Activated CD4-positive, alpha-beta memory T cell treated with anti-CD3 and anti-CD28 coated beads for 36 hours (primary cell): ENCODE measurements at regions of chr1 and their contacts with region 1.

Region 1: GRCh38 chr1:33633019-33633801 is 160.8 kb downstream of the ZSCAN20 start:
- DNase-seq: peak; percentile 90
- H3K4me3 Mint-ChIP-seq: no peak overlapping the region
- H3K27ac Mint-ChIP-seq: no peak overlapping the region
- H3K4me1 Mint-ChIP-seq: no peaks in the 10 kb centered on the region
- H3K27me3 Mint-ChIP-seq: peaks cover 16% of the 10 kb centered on the region

Region 2: GRCh38 chr1:32761253-32761880 is 871.8 kb before region 1 on chr1:
- CTCF ChIA-PET with region 1: no interaction called
- POLR2A ChIA-PET with region 1: no interaction called
- intact Hi-C with region 1: no loop called
- DNase-seq: peak; percentile 75
- H3K4me3 Mint-ChIP-seq: no peak overlapping the region
- H3K27ac Mint-ChIP-seq: peak overlapping the region; percentile 44
- H3K4me1 Mint-ChIP-seq: peaks cover 27% of the 10 kb centered on the region
- H3K27me3 Mint-ChIP-seq: no peaks in the 10 kb centered on the region

Region 3: DNA sequence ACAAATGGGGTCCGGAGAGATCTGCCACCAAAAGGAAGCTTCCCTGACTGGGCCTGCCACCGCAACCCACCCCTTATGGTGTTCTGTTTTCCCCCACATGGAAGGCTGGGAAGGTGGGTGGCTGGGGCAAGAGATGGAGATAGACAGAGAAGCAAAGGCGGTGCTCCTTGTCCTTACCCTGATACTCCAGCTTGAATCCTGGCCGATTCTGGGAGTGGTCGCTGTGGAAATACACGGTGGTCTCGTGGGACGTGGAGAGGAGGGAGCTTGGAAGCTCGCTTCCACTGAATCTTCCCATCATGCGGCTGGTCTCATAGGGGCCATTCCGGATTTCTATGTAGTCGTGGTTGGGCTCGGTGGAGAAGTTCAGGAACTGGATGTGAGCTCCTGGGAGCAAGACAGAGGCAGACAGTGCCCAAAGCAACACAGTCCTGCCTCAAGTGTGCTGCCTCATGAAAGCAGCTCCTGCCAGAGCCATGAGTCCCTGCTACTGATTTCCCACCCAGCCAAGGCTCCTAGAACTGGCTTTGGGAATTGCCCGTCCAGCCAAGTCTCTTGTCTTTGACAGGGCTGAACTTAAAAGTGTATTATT is 22.2 kb before region 1 on chr1:
- CTCF ChIA-PET with region 1: interaction called, 18 read pairs
- POLR2A ChIA-PET with region 1: no interaction called
- intact Hi-C with region 1: no loop called
- DNase-seq: no peak
- H3K4me3 Mint-ChIP-seq: no peak overlapping the region
- H3K27ac Mint-ChIP-seq: no peak overlapping the region
- H3K4me1 Mint-ChIP-seq: no peaks in the 10 kb centered on the region
- H3K27me3 Mint-ChIP-seq: peaks cover 13% of the 10 kb centered on the region

Region 4: GRCh38 chr1:33616773-33617172 is 16.4 kb before region 1 on chr1:
- CTCF ChIA-PET with region 1: interaction called, 18 read pairs
- POLR2A ChIA-PET with region 1: no interaction called
- intact Hi-C with region 1: no loop called
- DNase-seq: no peak
- H3K4me3 Mint-ChIP-seq: no peak overlapping the region
- H3K27ac Mint-ChIP-seq: no peak overlapping the region
- H3K4me1 Mint-ChIP-seq: no peaks in the 10 kb centered on the region
- H3K27me3 Mint-ChIP-seq: peaks cover 28% of the 10 kb centered on the region

Region 5: GRCh38 chr1:33661811-33662454 is 28.7 kb after region 1 on chr1:
- CTCF ChIA-PET with region 1: interaction called, 18 read pairs
- POLR2A ChIA-PET with region 1: no interaction called
- intact Hi-C with region 1: no loop called
- DNase-seq: no peak
- H3K4me3 Mint-ChIP-seq: no peak overlapping the region
- H3K27ac Mint-ChIP-seq: no peak overlapping the region
- H3K4me1 Mint-ChIP-seq: no peaks in the 10 kb centered on the region
- H3K27me3 Mint-ChIP-seq: peaks cover 6% of the 10 kb centered on the region

Region 6: GRCh38 chr1:34162852-34163766 is 529.9 kb after region 1 on chr1:
- CTCF ChIA-PET with region 1: interaction called, 6 read pairs
- POLR2A ChIA-PET with region 1: no interaction called
- intact Hi-C with region 1: loop called (anchors 5 kb)
- DNase-seq: peak; percentile 56
- H3K4me3 Mint-ChIP-seq: peak overlapping the region; percentile 20
- H3K27ac Mint-ChIP-seq: no peak overlapping the region
- H3K4me1 Mint-ChIP-seq: peaks cover 6% of the 10 kb centered on the region
- H3K27me3 Mint-ChIP-seq: peaks cover 51% of the 10 kb centered on the region

Region 7: GRCh38 chr1:34597877-34598514 is 964.8 kb after region 1 on chr1:
- CTCF ChIA-PET with region 1: interaction called, 19 read pairs
- POLR2A ChIA-PET with region 1: no interaction called
- intact Hi-C with region 1: no loop called
- DNase-seq: peak; percentile 71
- H3K4me3 Mint-ChIP-seq: no peak overlapping the region
- H3K27ac Mint-ChIP-seq: no peak overlapping the region
- H3K4me1 Mint-ChIP-seq: no peaks in the 10 kb centered on the region
- H3K27me3 Mint-ChIP-seq: peaks cover 12% of the 10 kb centered on the region

Region 8: GRCh38 chr1:34742667-34743270 is 1109.6 kb after region 1 on chr1:
- CTCF ChIA-PET with region 1: interaction called, 48 read pairs
- POLR2A ChIA-PET with region 1: no interaction called
- intact Hi-C with region 1: loop called (anchors 5 kb)
- DNase-seq: peak; percentile 83
- H3K4me3 Mint-ChIP-seq: no peak overlapping the region
- H3K27ac Mint-ChIP-seq: no peak overlapping the region
- H3K4me1 Mint-ChIP-seq: no peaks in the 10 kb centered on the region
- H3K27me3 Mint-ChIP-seq: peaks cover 2% of the 10 kb centered on the region